Ascending aorta (tissue), 2 donors: ENCODE measurements at regions of chr6 and their contacts with region 1.

Region 1: DNA sequence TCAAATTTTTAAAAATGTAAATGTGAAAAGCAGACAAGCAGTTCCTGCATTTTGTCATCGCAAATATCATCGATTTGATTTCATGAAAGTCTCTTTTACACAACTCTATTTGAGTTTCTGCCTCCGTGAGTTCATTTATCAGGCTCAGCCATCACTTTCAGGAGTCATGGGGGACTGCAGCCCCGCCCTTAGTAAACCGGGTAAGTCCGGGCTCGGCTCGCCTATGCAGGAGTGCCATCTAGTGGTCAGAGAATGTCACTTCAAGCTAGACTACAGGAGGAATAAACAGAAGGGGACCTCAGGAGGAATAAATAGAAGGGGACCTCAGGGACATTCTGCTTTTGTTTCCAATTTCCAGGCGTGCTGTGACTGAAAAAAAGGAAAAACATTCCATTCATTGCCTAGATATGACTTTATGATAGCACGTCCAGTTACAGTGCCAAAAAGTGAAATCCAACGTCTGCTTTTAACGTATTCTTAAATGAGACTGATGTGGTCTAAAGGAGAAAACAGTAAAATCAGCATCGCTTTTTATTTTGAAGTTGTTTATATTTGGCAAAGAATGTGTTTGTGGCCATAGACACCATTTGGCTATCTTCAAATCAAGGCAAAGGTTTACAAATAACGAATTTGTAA is 333.9 kb downstream of the HACE1 start:
- DNase-seq: peak; percentile 26 to 87
- H3K4me3 ChIP-seq: peak overlapping the region; percentile 43 to 56
- H3K27ac ChIP-seq: peak overlapping the region; percentile 33 to 56
- H3K4me1 ChIP-seq: peaks cover 0 to 12% of the 10 kb centered on the region in 2 donors
- H3K27me3 ChIP-seq: no peaks in the 10 kb centered on the region
- CTCF ChIP-seq: peak; percentile 74 to 96 (median 94)

Region 2: GRCh38 chr6:104332364-104332763 is 193.4 kb before region 1 on chr6:
- intact Hi-C with region 1: loop called (anchors 10 kb)
- DNase-seq: no peak
- H3K4me3 ChIP-seq: no peak overlapping the region
- H3K27ac ChIP-seq: no peak overlapping the region
- H3K4me1 ChIP-seq: no peaks in the 10 kb centered on the region
- H3K27me3 ChIP-seq: no peaks in the 10 kb centered on the region
- CTCF ChIP-seq: no peak

Region 3: GRCh38 chr6:104771258-104771832 is 245.6 kb after region 1 on chr6:
- intact Hi-C with region 1: loop called (anchors 5 kb)
- DNase-seq: no peak
- H3K4me3 ChIP-seq: no peak overlapping the region
- H3K27ac ChIP-seq: no peak overlapping the region
- H3K4me1 ChIP-seq: no peaks in the 10 kb centered on the region
- H3K27me3 ChIP-seq: no peaks in the 10 kb centered on the region
- CTCF ChIP-seq: peak; percentile 20 to 60 (median 49)

Region 4: DNA sequence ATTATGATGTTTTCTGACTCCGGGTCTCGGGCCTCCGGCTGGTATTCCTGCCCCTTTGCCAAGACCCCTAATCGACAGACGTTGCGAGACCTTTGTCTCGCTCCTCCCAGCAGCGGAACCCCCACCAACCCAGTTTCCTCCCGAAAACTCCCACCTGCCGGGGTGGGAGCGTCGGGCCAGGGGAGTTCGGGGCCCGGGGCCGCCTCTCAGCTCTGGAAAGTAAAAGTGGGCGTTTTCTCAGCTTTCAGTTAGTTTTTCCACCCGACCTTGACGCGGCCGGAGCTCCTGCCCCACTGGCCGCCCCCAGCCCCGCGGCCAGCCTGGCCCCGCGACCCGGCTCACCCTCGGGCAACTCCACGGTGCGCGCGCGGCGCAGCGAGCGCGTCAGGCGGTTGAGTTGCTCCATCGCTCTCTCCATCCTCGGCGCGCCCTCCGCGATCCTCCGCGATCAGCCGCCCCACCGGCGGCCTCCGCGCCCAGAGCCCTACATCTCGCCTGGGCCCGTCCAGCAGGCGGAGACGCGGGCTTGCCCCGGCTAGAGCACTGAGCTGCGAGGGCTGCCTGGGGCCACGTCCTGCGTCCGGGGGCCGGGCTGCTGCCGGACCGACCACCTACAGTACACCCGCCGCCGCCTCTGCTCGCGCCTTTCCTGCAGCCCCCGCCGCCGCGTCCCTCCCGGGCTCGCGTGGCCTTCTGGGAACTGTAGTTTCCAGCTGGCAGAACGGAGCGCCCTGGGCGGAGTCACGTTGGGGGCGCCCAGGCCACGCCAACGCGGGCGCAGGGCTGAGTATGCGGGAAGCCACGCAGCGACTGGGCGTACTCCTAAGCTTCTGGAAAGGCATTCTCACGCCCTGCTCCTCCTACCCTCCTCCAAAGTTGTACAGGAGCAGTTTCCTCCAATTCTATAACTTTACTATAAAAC is 333.7 kb after region 1 on chr6 and contains the start of gene HACE1:
- intact Hi-C with region 1: loop called (anchors 5 kb)
- DNase-seq: peak; percentile 43 to 95
- H3K4me3 ChIP-seq: peak within 1 kb of the TSS; percentile 59 to 90
- H3K27ac ChIP-seq: peak within 1 kb of the TSS; percentile 54 to 69
- H3K4me1 ChIP-seq: peaks cover 0 to 7% of the 10 kb centered on the region in 2 donors
- H3K27me3 ChIP-seq: no peaks in the 10 kb centered on the region
- CTCF ChIP-seq: peak; percentile 5 to 17 (median 9)
- total RNA-seq, gene HACE1: 7.7 TPM